Mammary epithelial cell (primary cell): ENCODE measurements at regions of chr13 and their contacts with region 1.

Region 1: DNA sequence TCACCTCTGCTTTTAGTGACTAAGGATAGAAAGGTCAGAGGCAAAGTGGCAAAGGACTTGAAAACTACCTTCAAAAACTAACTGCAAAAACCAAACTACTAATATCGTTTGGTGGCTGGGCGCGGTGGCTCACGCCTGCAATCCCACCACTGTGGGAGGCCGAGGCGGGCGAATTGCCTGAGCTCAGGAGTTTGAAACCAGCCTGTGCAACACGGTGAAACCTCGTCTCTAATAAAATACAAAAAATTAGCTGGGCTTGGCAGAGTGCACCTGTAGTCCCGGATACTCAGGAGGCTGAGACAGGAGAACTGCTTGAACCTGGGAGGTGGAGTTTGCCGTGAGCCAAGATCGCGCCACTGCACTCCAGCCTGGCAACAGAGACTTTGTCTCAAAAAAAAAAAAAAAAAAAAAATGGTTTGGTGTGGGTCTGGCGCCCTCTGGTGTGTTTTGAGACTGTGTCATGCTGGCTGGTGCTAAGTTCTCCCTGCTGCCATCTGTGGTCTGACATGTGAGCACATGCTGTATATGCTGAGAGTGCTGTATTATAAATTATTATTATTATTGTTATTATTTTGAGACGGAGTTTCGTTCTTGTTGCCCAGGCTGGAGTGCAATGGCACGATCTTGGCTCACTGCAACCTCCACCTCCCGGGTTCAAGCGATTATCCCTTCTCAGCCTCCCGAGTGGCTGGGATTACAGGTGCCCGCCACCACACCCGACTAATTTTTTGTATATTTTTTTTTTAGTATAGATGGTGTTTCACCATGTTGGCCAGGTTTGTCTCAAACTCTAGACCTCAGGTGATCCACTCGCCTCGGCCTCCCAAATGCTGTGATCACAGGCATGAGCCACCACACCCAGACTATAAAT is 36.0 kb upstream of the RNF17 start:
- DNase-seq: peak; percentile 73
- H3K4me3 ChIP-seq: no peak overlapping the region
- H3K27ac ChIP-seq: no peak overlapping the region
- H3K4me1 ChIP-seq: no peaks in the 10 kb centered on the region
- H3K27me3 ChIP-seq: no peaks in the 10 kb centered on the region
- CTCF ChIP-seq: peak; percentile 87 to 88

Region 2: DNA sequence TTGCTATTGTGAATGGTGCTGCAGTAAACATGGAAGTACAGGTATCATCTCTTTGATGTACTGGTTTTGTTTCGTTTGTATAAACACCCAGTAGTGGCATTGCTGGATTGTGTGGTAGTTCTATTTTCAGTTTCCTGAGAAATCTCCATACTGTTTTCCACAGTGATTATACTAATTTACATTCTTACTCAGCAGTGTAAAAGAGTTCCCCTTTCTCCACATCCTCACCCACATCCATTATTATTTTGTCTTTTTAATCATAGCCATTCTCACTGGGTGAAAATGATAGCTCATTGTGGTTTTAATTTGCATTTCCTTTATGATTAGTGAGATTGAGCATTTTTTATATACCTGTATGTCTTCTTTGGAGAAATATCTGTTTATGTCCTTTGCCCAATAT is 153.1 kb before region 1 on chr13:
- CTCF ChIA-PET with region 1: interaction called, 4 read pairs
- dilution Hi-C with region 1: no loop called
- in situ Hi-C with region 1: no loop called
- intact Hi-C with region 1: loop called (anchors 1 kb)
- DNase-seq: no peak
- H3K4me3 ChIP-seq: no peak overlapping the region
- H3K27ac ChIP-seq: no peak overlapping the region
- H3K4me1 ChIP-seq: no peaks in the 10 kb centered on the region
- H3K27me3 ChIP-seq: no peaks in the 10 kb centered on the region
- CTCF ChIP-seq: no peak

Region 3: DNA sequence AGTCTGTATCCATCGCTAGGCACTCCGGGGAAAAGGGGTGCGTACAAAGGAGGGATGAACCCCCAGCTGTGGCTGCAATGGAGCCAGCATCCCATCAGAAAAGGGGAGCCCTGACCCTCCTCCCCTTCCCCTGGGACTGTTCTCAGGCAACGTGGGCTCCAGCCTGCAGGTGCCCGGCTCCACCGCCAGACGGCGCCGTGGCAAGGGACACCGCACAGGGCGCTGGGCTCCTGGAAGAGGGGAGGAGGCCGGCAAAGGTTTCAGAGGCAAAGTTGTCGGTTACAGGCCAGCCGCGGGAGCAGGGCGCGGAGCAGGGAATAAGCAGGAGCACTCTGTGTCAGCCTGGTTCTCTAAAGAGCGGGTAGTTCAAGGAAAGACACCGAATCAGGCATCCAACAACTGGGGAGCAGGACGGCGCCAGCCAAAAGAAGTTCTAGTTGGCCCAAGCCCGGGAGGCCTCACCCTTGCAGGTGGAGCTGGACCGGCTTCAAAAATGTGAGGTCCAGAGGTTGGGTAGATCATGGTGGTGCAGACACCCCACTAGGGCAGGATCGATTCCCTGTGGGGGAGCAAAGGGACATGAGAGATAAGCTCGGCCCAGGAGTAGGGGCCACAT is 100.8 kb before region 1 on chr13:
- CTCF ChIA-PET with region 1: no interaction called
- dilution Hi-C with region 1: no loop called
- in situ Hi-C with region 1: no loop called
- intact Hi-C with region 1: loop called (anchors 1 kb)
- DNase-seq: no peak
- H3K4me3 ChIP-seq: no peak overlapping the region
- H3K27ac ChIP-seq: no peak overlapping the region
- H3K4me1 ChIP-seq: peaks cover 21% of the 10 kb centered on the region
- H3K27me3 ChIP-seq: no peaks in the 10 kb centered on the region
- CTCF ChIP-seq: peak; percentile 70 to 81

Region 4: GRCh38 chr13:24683838-24684599 is 43.9 kb before region 1 on chr13:
- CTCF ChIA-PET with region 1: no interaction called
- dilution Hi-C with region 1: no loop called
- in situ Hi-C with region 1: no loop called
- intact Hi-C with region 1: loop called (anchors 2 kb)
- DNase-seq: peak; percentile 30
- H3K4me3 ChIP-seq: no peak overlapping the region
- H3K27ac ChIP-seq: no peak overlapping the region
- H3K4me1 ChIP-seq: peaks cover 28% of the 10 kb centered on the region
- H3K27me3 ChIP-seq: no peaks in the 10 kb centered on the region
- CTCF ChIP-seq: peak; percentile 49 to 81

Region 5: GRCh38 chr13:24777171-24777570 is 49.2 kb after region 1 on chr13:
- CTCF ChIA-PET with region 1: no interaction called
- dilution Hi-C with region 1: no loop called
- in situ Hi-C with region 1: no loop called
- intact Hi-C with region 1: no loop called
- DNase-seq: peak; percentile 49
- H3K4me3 ChIP-seq: no peak overlapping the region
- H3K27ac ChIP-seq: no peak overlapping the region
- H3K4me1 ChIP-seq: no peaks in the 10 kb centered on the region
- H3K27me3 ChIP-seq: peaks cover 2% of the 10 kb centered on the region
- CTCF ChIP-seq: no peak